Right lobe of liver (tissue), 6 donors: ENCODE measurements at regions of chr2 and their contacts with region 1.

Region 1: GRCh38 chr2:229273723-229274338 is 2.7 kb upstream of the PID1 start:
- DNase-seq: peak; percentile 66 to 89 (median 77)
- ATAC-seq: peak; percentile 82 to 92 (median 89)
- H3K4me3 ChIP-seq: peak overlapping the region in 2 of 3 donors; percentile 26 to 47
- H3K27ac ChIP-seq: peak overlapping the region in 2 of 3 donors; percentile 45 to 86
- H3K4me1 ChIP-seq: peaks cover 0 to 8% (median 0%) of the 10 kb centered on the region in 4 donors
- H3K27me3 ChIP-seq: no peaks in the 10 kb centered on the region
- CTCF ChIP-seq: peak; percentile 83 to 95 (median 90)
- POLR2A ChIP-seq: no peak

Region 2: DNA sequence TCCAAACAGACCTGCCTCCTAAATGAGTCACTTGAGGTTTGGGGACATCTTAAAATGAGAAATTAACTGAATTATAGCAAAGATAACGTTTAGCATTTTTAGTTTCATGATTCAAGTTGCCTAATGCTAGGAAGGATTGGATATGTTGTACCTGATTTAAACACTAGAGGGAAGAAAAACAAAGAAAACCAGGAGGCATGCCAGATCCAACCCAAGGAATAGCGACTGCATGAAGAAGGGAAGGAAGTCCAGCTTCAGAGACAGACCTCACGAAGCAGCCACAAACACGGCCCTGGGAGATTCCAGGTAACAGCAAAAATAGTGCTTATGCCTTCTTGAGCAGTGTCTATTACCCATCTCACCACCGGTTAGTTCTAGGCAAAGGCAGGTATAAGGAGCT is 592.4 kb before region 1 on chr2:
- intact Hi-C with region 1: loop called in 1 of 2 experiments (anchors 10 kb)
- DNase-seq: no peak
- ATAC-seq: peak; percentile 85 to 94 (median 91)
- H3K4me3 ChIP-seq: no peak overlapping the region
- H3K27ac ChIP-seq: no peak overlapping the region
- H3K4me1 ChIP-seq: no peaks in the 10 kb centered on the region
- H3K27me3 ChIP-seq: no peaks in the 10 kb centered on the region
- CTCF ChIP-seq: peak; percentile 46 to 70 (median 52)
- POLR2A ChIP-seq: no peak

Region 3: DNA sequence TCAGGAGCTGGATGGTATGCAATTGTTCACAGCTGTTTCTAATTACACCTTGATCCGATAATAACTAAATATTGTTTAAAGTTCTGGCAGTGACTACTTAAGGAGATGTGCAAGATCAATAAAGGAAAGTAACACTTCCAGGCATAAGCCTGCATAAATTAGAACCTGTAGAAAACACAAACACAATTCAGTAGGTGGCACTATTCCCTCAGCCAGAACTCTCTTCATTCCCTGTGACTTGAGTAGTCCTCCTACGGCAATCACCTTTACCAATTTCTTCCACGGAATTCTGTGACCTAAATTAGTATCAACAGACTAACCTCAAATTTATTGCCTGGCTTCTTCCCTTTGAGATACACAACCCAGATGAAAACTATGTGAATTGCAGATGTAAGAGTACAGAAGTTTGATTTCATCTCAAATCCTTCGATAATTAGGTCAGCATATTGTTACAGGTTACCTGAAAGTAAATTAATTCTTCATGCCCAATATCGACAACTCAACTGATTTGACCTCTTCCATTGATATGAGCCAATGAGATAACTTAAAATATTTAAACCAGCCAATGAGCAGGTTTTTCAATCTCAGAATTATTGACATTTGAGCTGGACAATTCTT is 140.6 kb before region 1 on chr2:
- intact Hi-C with region 1: loop called in 1 of 2 experiments (anchors 10 kb)
- DNase-seq: no peak
- ATAC-seq: peak; percentile 88 to 93 (median 90)
- H3K4me3 ChIP-seq: no peak overlapping the region
- H3K27ac ChIP-seq: no peak overlapping the region
- H3K4me1 ChIP-seq: peaks cover 0 to 8% (median 0%) of the 10 kb centered on the region in 4 donors
- H3K27me3 ChIP-seq: no peaks in the 10 kb centered on the region
- CTCF ChIP-seq: peak; percentile 52 to 70 (median 62)
- POLR2A ChIP-seq: no peak